MCF 10A (cell line): ENCODE measurements at regions of chr2 and their contacts with region 1.

Region 1: DNA sequence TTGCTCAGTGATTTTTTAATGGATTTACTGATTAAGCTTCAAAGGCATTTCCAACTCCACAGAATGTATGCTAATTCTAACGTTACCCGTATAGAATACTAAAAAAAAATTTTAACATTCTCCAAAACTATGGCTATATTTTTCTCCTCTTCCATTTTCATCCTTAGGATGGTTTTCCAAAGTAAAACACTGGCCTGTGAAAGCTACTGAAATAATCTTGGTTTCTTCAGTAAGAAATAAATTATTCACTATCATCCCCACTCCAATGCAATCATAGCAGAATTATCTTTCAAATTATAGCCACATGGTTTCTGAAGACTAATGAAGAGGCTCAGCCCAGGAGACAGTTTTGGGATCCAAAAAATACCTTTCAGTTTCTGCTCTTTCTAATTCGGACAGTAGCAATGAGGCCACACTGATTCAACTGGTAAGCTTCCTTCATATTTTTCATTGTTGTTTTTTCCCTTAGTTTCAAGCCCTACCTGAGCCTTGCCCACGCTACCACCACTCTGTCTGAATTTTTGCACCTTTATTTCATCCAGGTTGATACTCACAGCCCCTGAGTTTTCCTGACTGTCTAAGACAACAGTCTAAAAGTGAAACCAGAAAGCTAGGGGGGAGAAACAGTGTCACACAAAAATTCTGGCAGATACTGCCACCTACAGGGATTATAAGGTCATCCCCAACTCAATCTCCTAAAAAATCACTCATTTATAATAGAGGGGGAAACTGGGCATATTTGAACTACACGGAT is 887.9 kb downstream of the NRXN1 start:
- DNase-seq: peak; percentile 63
- H3K4me3 Mint-ChIP-seq: peak overlapping the region; percentile 69
- H3K27ac Mint-ChIP-seq: peak overlapping the region; percentile 68
- H3K4me1 Mint-ChIP-seq: peaks cover 18% of the 10 kb centered on the region
- H3K27me3 Mint-ChIP-seq: peaks cover 15% of the 10 kb centered on the region
- CTCF ChIP-seq: peak; percentile 51

Region 2: DNA sequence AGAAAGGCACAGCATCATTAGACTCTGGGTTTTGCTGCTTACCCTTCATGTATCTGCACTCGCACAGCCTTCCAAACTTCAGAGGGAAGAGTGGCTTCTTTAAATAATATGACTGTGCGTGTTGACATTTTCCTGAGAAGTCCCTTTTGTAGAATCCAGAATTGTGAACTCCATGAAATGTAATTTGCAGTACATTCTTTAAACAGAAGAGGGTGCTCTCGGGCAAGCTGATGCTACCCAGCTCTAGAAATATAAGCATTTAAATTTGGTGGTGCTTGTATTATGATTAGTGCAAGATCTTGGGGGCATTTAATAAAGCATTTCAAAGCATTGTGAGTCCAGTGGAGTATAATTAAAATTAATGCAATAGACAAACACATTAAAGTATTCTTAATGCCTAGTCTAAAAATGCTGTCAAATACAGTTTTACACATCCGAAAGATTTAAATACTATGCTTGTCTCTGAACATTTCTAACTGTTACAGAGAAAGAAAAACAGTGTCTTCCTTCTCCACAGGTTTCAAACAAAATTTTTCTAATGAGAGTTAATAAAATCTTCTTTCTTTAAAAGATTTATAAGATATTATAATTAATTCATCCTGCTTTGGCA is 1543.7 kb before region 1 on chr2:
- CTCF ChIA-PET with region 1: interaction called, 7 read pairs
- POLR2A ChIA-PET with region 1: no interaction called
- intact Hi-C with region 1: loop called (anchors 1 kb)
- DNase-seq: peak; percentile 57
- H3K4me3 Mint-ChIP-seq: no peak overlapping the region
- H3K27ac Mint-ChIP-seq: no peak overlapping the region
- H3K4me1 Mint-ChIP-seq: no peaks in the 10 kb centered on the region
- H3K27me3 Mint-ChIP-seq: no peaks in the 10 kb centered on the region
- CTCF ChIP-seq: peak; percentile 79

Region 3: GRCh38 chr2:49255409-49255971 is 888.5 kb before region 1 on chr2:
- CTCF ChIA-PET with region 1: no interaction called
- POLR2A ChIA-PET with region 1: no interaction called
- intact Hi-C with region 1: loop called (anchors 5 kb)
- DNase-seq: no peak
- H3K4me3 Mint-ChIP-seq: no peak overlapping the region
- H3K27ac Mint-ChIP-seq: no peak overlapping the region
- H3K4me1 Mint-ChIP-seq: peaks cover 5% of the 10 kb centered on the region
- H3K27me3 Mint-ChIP-seq: peaks cover 9% of the 10 kb centered on the region
- CTCF ChIP-seq: peak; percentile 28

Region 4: DNA sequence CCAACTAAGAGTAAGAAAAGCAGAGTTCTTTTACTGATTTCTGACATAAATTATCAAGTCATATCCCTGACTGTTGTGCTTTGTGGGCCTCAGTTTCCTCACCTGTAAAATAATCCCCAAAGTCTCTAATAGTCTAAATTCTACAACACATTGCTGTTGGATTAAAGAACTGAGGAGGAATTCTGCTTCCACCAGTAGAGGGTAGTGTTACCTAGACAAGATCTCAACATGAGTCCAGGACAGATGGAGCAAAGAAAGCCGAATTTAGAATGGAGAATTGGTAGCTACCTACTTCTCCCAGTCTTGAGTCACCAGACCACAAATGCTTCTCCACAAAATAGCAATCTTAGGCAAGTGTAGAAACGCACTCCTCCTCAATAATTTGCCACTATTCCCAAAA is 527.2 kb before region 1 on chr2:
- CTCF ChIA-PET with region 1: interaction called, 5 read pairs
- POLR2A ChIA-PET with region 1: no interaction called
- intact Hi-C with region 1: loop called (anchors 1 kb)
- DNase-seq: peak; percentile 56
- H3K4me3 Mint-ChIP-seq: no peak overlapping the region
- H3K27ac Mint-ChIP-seq: no peak overlapping the region
- H3K4me1 Mint-ChIP-seq: no peaks in the 10 kb centered on the region
- H3K27me3 Mint-ChIP-seq: peaks cover 13% of the 10 kb centered on the region
- CTCF ChIP-seq: peak; percentile 49

Region 5: DNA sequence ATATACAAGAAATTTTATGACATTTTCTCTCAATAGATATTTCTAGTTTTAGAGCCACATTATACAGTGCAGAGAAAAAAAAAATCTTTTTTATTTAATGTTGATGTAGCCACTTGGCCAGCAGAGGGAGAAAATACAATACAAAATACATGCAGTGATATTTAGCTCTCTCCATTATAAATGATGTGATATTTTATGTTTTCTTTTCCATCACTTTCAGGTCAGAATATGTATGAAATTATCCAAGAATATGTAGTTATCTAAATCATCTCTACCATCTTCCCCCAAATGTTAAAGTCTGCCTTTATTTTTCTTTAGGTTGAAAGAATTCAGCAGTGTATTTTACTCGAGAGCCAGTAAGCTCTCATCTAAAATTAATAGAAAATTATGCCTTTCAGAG is 456.1 kb before region 1 on chr2:
- CTCF ChIA-PET with region 1: interaction called, 40 read pairs
- POLR2A ChIA-PET with region 1: no interaction called
- intact Hi-C with region 1: loop called (anchors 1 kb)
- DNase-seq: no peak
- H3K4me3 Mint-ChIP-seq: no peak overlapping the region
- H3K27ac Mint-ChIP-seq: no peak overlapping the region
- H3K4me1 Mint-ChIP-seq: no peaks in the 10 kb centered on the region
- H3K27me3 Mint-ChIP-seq: peaks cover 22% of the 10 kb centered on the region
- CTCF ChIP-seq: peak; percentile 39

Region 6: GRCh38 chr2:49770919-49771318 is 373.1 kb before region 1 on chr2:
- CTCF ChIA-PET with region 1: interaction called, 24 read pairs
- POLR2A ChIA-PET with region 1: no interaction called
- intact Hi-C with region 1: loop called (anchors 1 kb)
- DNase-seq: peak; percentile 65
- H3K4me3 Mint-ChIP-seq: no peak overlapping the region
- H3K27ac Mint-ChIP-seq: no peak overlapping the region
- H3K4me1 Mint-ChIP-seq: no peaks in the 10 kb centered on the region
- H3K27me3 Mint-ChIP-seq: peaks cover 20% of the 10 kb centered on the region
- CTCF ChIP-seq: peak; percentile 55

Region 7: DNA sequence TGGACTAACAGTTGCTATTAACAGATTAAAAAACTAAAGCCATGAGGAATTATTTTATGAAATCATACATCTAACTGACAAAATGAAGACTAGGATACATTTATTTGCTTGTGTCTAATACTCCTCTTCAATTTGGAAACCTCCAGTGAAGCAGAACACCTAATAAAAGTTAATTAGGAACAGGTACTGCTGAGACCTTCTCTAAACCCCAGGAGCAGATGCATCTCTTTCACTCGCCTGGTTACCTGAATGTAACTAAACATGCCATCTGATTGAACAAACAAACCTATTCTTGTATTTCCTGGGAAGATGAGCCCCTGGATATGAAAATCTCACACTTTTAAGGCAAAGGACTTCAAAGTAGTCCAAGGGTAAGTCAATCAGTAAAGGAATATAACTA is 10.2 kb before region 1 on chr2:
- CTCF ChIA-PET with region 1: interaction called, 10 read pairs
- POLR2A ChIA-PET with region 1: interaction called, 4 read pairs
- intact Hi-C with region 1: no loop called
- DNase-seq: no peak
- H3K4me3 Mint-ChIP-seq: no peak overlapping the region
- H3K27ac Mint-ChIP-seq: no peak overlapping the region
- H3K4me1 Mint-ChIP-seq: no peaks in the 10 kb centered on the region
- H3K27me3 Mint-ChIP-seq: peaks cover 24% of the 10 kb centered on the region
- CTCF ChIP-seq: no peak

Region 8: DNA sequence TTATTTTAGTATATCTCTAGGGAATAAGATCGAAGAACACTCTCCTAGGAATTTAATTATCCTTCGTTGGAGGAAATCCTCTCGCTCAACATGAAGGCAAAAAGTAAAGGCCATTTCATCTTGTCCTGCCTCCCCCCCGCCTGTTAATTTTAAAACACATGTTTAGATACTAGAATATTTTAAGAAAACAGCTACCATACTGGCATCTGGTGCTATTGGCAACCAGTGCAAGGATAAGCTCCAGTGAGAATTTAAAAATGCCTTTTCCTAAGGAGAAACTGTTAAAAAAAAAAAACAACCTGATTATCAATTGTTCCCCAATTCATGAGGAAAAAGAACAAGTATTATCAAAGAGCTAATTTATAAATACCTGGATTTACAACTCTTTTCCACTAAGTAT is 23.3 kb after region 1 on chr2:
- CTCF ChIA-PET with region 1: no interaction called
- POLR2A ChIA-PET with region 1: no interaction called
- intact Hi-C with region 1: no loop called
- DNase-seq: no peak
- H3K4me3 Mint-ChIP-seq: no peak overlapping the region
- H3K27ac Mint-ChIP-seq: no peak overlapping the region
- H3K4me1 Mint-ChIP-seq: no peaks in the 10 kb centered on the region
- H3K27me3 Mint-ChIP-seq: no peaks in the 10 kb centered on the region
- CTCF ChIP-seq: no peak

Region 9: DNA sequence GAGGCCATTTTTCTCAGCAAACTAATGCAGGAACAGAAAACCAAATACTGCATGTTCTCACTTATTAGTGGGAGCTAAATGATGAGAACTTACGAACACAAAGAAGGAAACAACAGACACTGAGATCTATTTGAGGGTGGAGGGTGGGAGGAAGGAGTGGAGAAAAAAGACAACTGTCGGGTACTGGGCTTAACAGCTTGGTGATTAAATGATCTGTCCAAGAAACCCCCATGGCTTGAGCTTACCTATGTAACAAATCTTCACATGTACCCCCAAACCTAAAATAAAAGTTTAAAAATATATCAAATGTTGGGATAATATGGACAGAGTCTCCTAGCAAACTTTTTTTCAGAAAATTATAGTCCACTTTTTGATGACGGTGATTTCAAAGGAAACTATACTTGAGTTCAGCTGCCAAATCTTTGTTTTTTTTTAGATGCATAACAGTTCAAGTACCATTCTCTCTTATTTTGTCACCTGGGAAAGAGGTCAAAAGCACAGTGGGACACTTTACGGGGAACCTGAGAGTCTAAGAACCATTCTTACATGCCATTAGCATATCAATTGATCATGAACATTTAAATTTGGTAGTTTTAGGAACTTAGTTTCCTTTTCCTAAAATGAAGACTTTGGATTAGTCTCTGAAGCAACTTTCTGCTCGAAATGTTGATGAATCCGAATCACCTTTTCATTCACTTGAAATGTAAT is 52.9 kb after region 1 on chr2:
- CTCF ChIA-PET with region 1: no interaction called
- POLR2A ChIA-PET with region 1: no interaction called
- intact Hi-C with region 1: no loop called
- DNase-seq: no peak
- H3K4me3 Mint-ChIP-seq: no peak overlapping the region
- H3K27ac Mint-ChIP-seq: no peak overlapping the region
- H3K4me1 Mint-ChIP-seq: no peaks in the 10 kb centered on the region
- H3K27me3 Mint-ChIP-seq: peaks cover 40% of the 10 kb centered on the region
- CTCF ChIP-seq: no peak

Region 10: GRCh38 chr2:50333529-50334228 is 189.7 kb after region 1 on chr2:
- CTCF ChIA-PET with region 1: no interaction called
- POLR2A ChIA-PET with region 1: no interaction called
- intact Hi-C with region 1: no loop called
- DNase-seq: no peak
- H3K4me3 Mint-ChIP-seq: no peak overlapping the region
- H3K27ac Mint-ChIP-seq: no peak overlapping the region
- H3K4me1 Mint-ChIP-seq: no peaks in the 10 kb centered on the region
- H3K27me3 Mint-ChIP-seq: peaks cover 50% of the 10 kb centered on the region
- CTCF ChIP-seq: no peak

Region 11: GRCh38 chr2:51158251-51158650 is 1014.3 kb after region 1 on chr2:
- CTCF ChIA-PET with region 1: no interaction called
- POLR2A ChIA-PET with region 1: no interaction called
- intact Hi-C with region 1: no loop called
- DNase-seq: peak; percentile 75
- H3K4me3 Mint-ChIP-seq: no peak overlapping the region
- H3K27ac Mint-ChIP-seq: no peak overlapping the region
- H3K4me1 Mint-ChIP-seq: no peaks in the 10 kb centered on the region
- H3K27me3 Mint-ChIP-seq: no peaks in the 10 kb centered on the region
- CTCF ChIP-seq: no peak